ENCODE measurements at regions of chr3 and their contacts with region 1.

Region 1: GRCh38 chr3:145070795-145071194 is 1090.2 kb downstream of the PLOD2 start:
- DNase-seq: no peak
- H3K4me3 ChIP-seq: no peak overlapping the region
- H3K27ac ChIP-seq: no peak overlapping the region
- H3K4me1 ChIP-seq: no peaks in the 10 kb centered on the region
- CTCF ChIP-seq: no peak

Region 2: DNA sequence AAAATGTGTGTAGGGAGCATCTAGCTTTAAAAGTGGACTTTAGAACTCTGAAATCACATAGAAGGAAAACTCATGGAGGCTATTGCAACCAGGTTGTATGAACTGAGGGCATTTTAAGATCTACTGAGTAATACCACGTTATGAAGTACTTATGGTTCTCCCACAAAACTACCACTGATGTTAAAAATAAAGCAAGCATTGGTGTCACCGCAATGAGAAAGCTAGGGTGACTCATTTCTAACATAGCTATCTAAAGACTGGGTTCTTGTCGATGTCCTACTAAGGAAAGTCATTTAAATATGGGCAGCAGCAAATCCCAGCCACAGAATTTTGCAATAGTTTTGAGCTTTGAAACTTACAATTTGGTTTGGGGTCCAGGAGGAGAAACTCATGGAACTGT is 514.4 kb before region 1 on chr3:
- CTCF ChIA-PET with region 1: no interaction called
- POLR2A ChIA-PET with region 1: interaction called, 12 read pairs
- intact Hi-C with region 1: no loop called
- DNase-seq: no peak
- H3K4me3 ChIP-seq: no peak overlapping the region
- H3K27ac ChIP-seq: no peak overlapping the region
- H3K4me1 ChIP-seq: no peaks in the 10 kb centered on the region
- CTCF ChIP-seq: no peak

Region 3: DNA sequence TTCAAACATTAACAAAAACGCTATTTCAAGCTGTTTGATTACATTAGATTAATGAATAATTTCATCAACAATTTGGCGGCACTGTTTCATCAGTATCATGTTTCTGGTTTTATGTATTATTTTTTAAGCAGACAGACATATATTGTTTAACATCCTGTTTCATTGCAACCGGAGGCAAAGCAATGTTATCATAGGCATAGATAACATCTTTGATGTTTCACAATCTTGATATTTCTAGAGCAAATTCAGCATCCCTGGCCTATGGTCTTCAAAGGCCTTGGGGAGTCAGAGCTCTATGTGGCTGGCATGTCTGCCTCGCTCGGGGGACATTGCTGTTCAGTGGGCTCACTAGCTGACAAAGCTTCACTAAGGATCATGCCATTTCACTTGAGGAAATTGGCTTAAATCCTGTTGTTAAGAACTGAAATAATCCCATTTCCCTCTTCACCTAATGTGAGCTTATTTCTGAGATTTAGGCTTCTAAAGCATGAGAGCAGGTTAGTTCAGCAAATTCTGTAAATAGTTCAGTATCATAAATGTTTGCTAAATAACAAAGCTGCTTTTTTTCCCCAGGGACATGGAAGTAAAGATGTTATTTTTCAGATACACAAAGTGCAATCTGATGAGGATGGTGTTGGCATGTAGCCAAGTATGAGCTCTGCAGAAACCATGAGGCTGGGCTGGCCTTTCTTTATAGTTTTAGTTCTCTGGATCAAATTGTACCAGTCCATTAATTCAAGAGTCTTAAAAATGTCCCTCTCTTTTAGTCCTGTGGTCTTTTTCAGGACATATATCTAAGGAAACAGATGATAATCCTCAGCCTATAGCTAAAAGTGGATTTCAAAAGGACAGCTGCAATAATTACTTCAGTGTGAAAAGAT is 148.8 kb after region 1 on chr3:
- CTCF ChIA-PET with region 1: no interaction called
- POLR2A ChIA-PET with region 1: no interaction called
- intact Hi-C with region 1: no loop called
- DNase-seq: no peak
- H3K4me3 ChIP-seq: no peak overlapping the region
- H3K27ac ChIP-seq: no peak overlapping the region
- H3K4me1 ChIP-seq: no peaks in the 10 kb centered on the region
- CTCF ChIP-seq: no peak